H1 (cell line): ENCODE measurements at regions of chr15 and their contacts with region 1.

Region 1: GRCh38 chr15:77983708-77984445 is 93.6 kb downstream of the TBC1D2B start:
- DNase-seq: peak in 1 of 2 experiments; percentile 41
- H3K4me3 ChIP-seq: no peak overlapping the region
- H3K27ac ChIP-seq: no peak overlapping the region
- H3K4me1 ChIP-seq: peaks cover 0 to 16% (median 11%) of the 10 kb centered on the region in 4 experiments; a peak in 6 of 7 replicates
- H3K27me3 ChIP-seq: no peaks in the 10 kb centered on the region
- CTCF ChIP-seq: peak in 2 of 3 experiments; percentile 18 to 45; a peak in 1 of 4 replicates
- EP300 ChIP-seq: no peak
- POLR2A ChIP-seq: no peak
- RAD21 ChIP-seq: peak in 1 of 2 experiments; percentile 33; a peak in 1 of 4 replicates

Region 2: GRCh38 chr15:77851691-77852090 is 132.2 kb before region 1 on chr15:
- CTCF ChIA-PET with region 1: no interaction called
- POLR2A ChIA-PET with region 1: no interaction called
- DNase-seq: no peak
- H3K4me3 ChIP-seq: no peak overlapping the region
- H3K27ac ChIP-seq: no peak overlapping the region
- H3K4me1 ChIP-seq: no peaks in the 10 kb centered on the region
- H3K27me3 ChIP-seq: peaks cover 0 to 3% (median 0%) of the 10 kb centered on the region in 4 experiments; a peak in 2 of 7 replicates
- CTCF ChIP-seq: no peak
- EP300 ChIP-seq: no peak
- POLR2A ChIP-seq: no peak
- RAD21 ChIP-seq: no peak

Region 3: DNA sequence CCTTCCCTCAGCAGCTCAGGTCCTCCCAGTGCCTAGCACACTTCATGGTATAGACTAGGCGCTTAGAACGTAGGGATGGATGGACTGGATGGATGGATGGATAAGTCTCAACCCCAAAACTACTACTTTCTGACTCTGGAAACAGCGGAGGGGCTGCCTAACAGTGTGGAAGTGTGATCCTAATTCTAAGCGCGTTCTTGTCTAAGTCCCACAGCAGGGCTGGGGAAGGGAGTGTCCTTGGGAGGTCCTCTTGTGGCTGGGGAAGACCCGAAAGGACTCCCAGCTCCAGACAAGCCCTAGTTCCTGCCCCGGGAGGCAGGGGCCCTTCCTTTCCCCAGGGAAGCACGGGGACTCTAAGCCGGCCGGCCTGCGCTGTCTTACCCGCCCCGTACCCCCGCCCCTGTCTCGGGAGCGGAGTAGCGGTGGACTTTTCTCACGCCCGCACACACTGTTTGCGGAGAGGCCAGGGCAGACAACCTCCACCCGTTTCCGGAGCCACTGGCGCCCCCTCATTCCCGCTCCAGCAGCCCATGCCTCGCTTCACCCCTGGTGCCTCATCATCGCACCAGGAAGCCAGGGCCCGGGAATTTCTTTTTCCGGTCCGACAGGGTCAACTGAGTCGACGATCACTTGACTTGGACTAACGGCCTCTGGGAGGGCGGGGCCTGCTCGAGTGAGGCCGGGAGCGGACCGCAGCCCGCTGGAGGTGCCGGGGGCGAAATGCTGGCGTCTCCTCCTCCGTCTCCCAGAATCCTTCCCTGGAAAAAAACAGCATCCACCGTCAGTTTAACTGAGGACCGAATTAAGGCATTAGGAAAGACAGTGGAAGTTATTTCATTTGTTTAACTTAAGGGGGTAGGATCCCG is 39.6 kb before region 1 on chr15:
- CTCF ChIA-PET with region 1: no interaction called
- POLR2A ChIA-PET with region 1: no interaction called
- DNase-seq: peak; percentile 27 to 81
- H3K4me3 ChIP-seq: peak overlapping the region; percentile 36 to 58 (median 46)
- H3K27ac ChIP-seq: no peak overlapping the region
- H3K4me1 ChIP-seq: peaks cover 2 to 5% (median 3%) of the 10 kb centered on the region in 4 experiments; a peak in 4 of 7 replicates
- H3K27me3 ChIP-seq: peaks cover 0 to 5% (median 0%) of the 10 kb centered on the region in 4 experiments; a peak in 2 of 7 replicates
- CTCF ChIP-seq: no peak
- EP300 ChIP-seq: no peak
- POLR2A ChIP-seq: no peak
- RAD21 ChIP-seq: no peak

Region 4: GRCh38 chr15:77966540-77967290 is 17.2 kb before region 1 on chr15:
- CTCF ChIA-PET with region 1: interaction called, 53 read pairs
- POLR2A ChIA-PET with region 1: no interaction called
- DNase-seq: peak in 1 of 2 experiments; percentile 69
- H3K4me3 ChIP-seq: no peak overlapping the region
- H3K27ac ChIP-seq: no peak overlapping the region
- H3K4me1 ChIP-seq: no peaks in the 10 kb centered on the region
- H3K27me3 ChIP-seq: no peaks in the 10 kb centered on the region; a peak in 1 of 7 replicates
- CTCF ChIP-seq: peak; percentile 71 to 85 (median 75)
- EP300 ChIP-seq: no peak
- POLR2A ChIP-seq: no peak
- RAD21 ChIP-seq: peak; percentile 84 to 85

Region 5: DNA sequence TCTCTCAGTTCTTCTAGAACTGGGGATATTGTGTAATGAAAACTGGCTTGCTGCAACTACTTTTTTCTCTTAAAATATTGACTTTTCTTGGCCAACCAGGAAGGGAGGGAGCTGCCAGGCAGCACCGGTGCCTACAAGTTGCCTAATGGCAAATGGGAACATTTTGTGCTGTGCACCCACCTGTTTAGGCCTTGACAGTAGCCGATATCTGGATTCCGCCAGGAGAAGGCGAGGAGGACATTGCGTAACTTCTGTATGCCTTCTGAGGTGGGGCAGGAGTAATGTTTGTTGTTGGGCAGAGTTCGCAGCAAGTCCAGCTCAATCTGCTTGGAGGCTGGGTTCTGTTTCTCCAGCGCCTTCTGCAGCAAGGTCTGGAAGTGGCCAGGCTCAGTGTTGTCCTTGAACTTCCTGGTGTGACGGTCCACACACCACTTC is 28.8 kb after region 1 on chr15:
- CTCF ChIA-PET with region 1: no interaction called
- POLR2A ChIA-PET with region 1: no interaction called
- DNase-seq: no peak
- H3K4me3 ChIP-seq: no peak overlapping the region
- H3K27ac ChIP-seq: no peak overlapping the region; the same call in 1 of the 2 replicates
- H3K4me1 ChIP-seq: no peaks in the 10 kb centered on the region; a peak in 1 of 7 replicates
- H3K27me3 ChIP-seq: no peaks in the 10 kb centered on the region
- CTCF ChIP-seq: no peak
- EP300 ChIP-seq: no peak
- POLR2A ChIP-seq: no peak
- RAD21 ChIP-seq: no peak

Region 6: GRCh38 chr15:78353093-78353492 is 369.2 kb after region 1 on chr15:
- CTCF ChIA-PET with region 1: no interaction called
- POLR2A ChIA-PET with region 1: no interaction called
- DNase-seq: no peak
- H3K4me3 ChIP-seq: no peak overlapping the region
- H3K27ac ChIP-seq: no peak overlapping the region
- H3K4me1 ChIP-seq: peaks cover 0 to 3% (median 1%) of the 10 kb centered on the region in 4 experiments; a peak in 5 of 7 replicates
- H3K27me3 ChIP-seq: no peaks in the 10 kb centered on the region
- CTCF ChIP-seq: no peak
- EP300 ChIP-seq: no peak
- POLR2A ChIP-seq: no peak
- RAD21 ChIP-seq: no peak